Activated CD8-positive, alpha-beta T cell treated with anti-CD3 and anti-CD28 coated beads for 36 hours (primary cell): ENCODE measurements at regions of chr4 and their contacts with region 1.

Region 1: DNA sequence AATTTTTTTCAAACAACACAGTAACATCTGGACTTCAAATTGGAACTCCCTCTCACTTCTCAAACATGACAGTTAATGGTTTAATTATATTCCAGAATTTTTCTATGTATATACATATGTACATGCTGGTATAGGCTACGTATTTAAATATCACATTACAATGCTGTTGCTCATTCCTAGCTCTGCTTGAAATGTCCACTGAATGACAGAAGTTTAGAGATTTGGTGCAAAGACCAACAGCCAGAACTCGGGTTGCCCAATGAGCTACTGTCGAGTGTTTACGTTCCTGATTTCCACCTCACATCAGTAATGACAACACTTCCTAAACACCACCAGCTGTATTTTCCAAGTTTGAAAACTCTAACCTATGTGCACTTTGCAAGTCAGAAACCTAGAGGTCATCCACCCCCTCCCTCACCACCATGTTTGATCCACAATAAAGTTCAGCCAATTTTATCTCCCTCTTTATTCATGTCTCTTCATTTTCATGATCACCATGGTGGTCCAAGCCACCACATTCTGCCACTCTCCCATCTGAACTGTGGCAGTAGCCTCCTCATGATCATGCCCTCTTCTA is 49.3 kb upstream of the RPL34 start:
- DNase-seq: no peak
- ATAC-seq: no peak
- H3K4me3 Mint-ChIP-seq: no peak overlapping the region
- H3K27ac Mint-ChIP-seq: no peak overlapping the region
- H3K4me1 Mint-ChIP-seq: peaks cover 33% of the 10 kb centered on the region
- H3K27me3 Mint-ChIP-seq: peaks cover 2% of the 10 kb centered on the region
- CTCF ChIP-seq: no peak

Region 2: GRCh38 chr4:108018040-108018883 is 552.8 kb before region 1 on chr4:
- CTCF ChIA-PET with region 1: interaction called, 107 read pairs
- POLR2A ChIA-PET with region 1: no interaction called
- intact Hi-C with region 1: loop called (anchors 2 kb)
- DNase-seq: peak; percentile 92
- ATAC-seq: peak; percentile 83
- H3K4me3 Mint-ChIP-seq: no peak overlapping the region
- H3K27ac Mint-ChIP-seq: no peak overlapping the region
- H3K4me1 Mint-ChIP-seq: peaks cover 14% of the 10 kb centered on the region
- H3K27me3 Mint-ChIP-seq: no peaks in the 10 kb centered on the region
- CTCF ChIP-seq: peak; percentile 85

Region 3: DNA sequence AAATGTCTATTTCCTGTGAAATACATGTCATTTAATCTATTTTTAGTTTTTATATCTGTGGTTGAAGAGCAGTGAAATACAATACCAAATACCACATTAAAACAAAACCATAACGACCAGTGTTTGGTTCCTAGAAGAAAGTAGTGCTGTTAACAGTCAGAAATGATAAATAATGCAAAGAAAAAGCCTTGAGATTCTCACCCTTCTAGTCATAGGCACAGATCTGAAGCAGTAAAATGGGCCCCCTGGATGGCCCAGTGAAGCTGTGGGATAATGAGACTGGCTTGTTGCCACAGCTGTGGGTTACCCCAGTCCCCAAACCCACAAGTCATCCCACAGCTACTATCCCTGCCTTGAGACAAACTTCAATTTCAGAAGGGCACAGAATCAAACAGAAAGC is 88.0 kb before region 1 on chr4:
- CTCF ChIA-PET with region 1: interaction called, 10 read pairs
- POLR2A ChIA-PET with region 1: no interaction called
- intact Hi-C with region 1: no loop called
- DNase-seq: peak; percentile 70
- ATAC-seq: peak; percentile 73
- H3K4me3 Mint-ChIP-seq: peak overlapping the region; percentile 57
- H3K27ac Mint-ChIP-seq: peak overlapping the region; percentile 85
- H3K4me1 Mint-ChIP-seq: peaks cover 35% of the 10 kb centered on the region
- H3K27me3 Mint-ChIP-seq: no peaks in the 10 kb centered on the region
- CTCF ChIP-seq: no peak

Region 4: GRCh38 chr4:108519911-108520601 is 51.0 kb before region 1 on chr4:
- CTCF ChIA-PET with region 1: interaction called, 18 read pairs
- POLR2A ChIA-PET with region 1: interaction called, 3 read pairs
- intact Hi-C with region 1: no loop called
- DNase-seq: no peak
- ATAC-seq: peak; percentile 39
- H3K4me3 Mint-ChIP-seq: no peak overlapping the region
- H3K27ac Mint-ChIP-seq: no peak overlapping the region
- H3K4me1 Mint-ChIP-seq: peaks cover 23% of the 10 kb centered on the region
- H3K27me3 Mint-ChIP-seq: no peaks in the 10 kb centered on the region
- CTCF ChIP-seq: no peak

Region 5: GRCh38 chr4:108586778-108587177 is 15.7 kb after region 1 on chr4:
- CTCF ChIA-PET with region 1: interaction called, 17 read pairs
- POLR2A ChIA-PET with region 1: no interaction called
- intact Hi-C with region 1: no loop called
- DNase-seq: no peak
- ATAC-seq: no peak
- H3K4me3 Mint-ChIP-seq: no peak overlapping the region
- H3K27ac Mint-ChIP-seq: no peak overlapping the region
- H3K4me1 Mint-ChIP-seq: peaks cover 2% of the 10 kb centered on the region
- H3K27me3 Mint-ChIP-seq: no peaks in the 10 kb centered on the region
- CTCF ChIP-seq: no peak

Region 6: GRCh38 chr4:108674356-108674977 is 103.4 kb after region 1 on chr4:
- CTCF ChIA-PET with region 1: no interaction called
- POLR2A ChIA-PET with region 1: no interaction called
- intact Hi-C with region 1: no loop called
- DNase-seq: no peak
- ATAC-seq: no peak
- H3K4me3 Mint-ChIP-seq: no peak overlapping the region
- H3K27ac Mint-ChIP-seq: no peak overlapping the region
- H3K4me1 Mint-ChIP-seq: peaks cover 4% of the 10 kb centered on the region
- H3K27me3 Mint-ChIP-seq: no peaks in the 10 kb centered on the region
- CTCF ChIP-seq: no peak